AG04449 (cell line): ENCODE measurements at regions of chr14 and their contacts with region 1.

Region 1: DNA sequence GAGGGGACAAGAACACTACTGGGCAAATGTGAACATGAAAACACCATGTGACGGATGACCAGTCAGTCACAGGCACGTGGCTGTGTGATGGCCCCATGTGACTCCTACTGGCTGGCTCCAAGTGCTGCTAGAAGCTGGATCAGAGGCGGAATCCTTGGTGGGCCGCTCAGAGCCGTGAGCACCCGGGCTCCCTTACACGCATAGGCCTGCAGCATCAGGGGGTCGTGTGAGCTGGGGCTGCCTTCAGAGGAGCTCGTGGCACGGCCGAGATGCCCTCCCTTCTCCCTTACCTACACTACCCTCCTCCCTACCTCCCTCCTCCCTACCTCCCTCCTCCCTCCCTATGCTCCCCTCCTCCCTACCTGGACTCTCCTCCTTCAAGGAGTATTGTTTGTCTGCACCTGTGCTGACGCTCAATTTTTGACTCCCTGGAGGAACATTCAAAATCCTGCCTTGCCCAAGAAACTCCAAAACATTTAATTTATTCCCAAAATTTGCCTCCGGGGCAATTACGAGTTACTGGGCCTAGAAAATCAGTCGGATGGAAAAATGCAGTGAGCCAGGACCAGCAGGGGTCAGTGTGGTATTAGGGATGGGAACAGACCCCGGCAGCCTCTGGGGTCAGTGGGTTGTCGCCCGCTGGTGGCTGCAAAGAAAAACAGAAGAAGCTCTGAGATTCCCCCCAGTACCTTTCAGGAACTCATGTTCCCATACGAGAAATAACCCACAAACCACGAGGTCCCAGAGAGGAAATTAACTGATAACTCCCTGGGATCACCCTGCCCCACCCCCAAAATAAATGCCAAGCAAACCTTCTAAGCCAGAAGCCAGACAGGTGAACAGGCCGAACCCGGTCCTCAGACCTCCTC is 61.2 kb downstream of the C14orf132 start:
- DNase-seq: no peak
- H3K4me3 ChIP-seq: no peak overlapping the region
- CTCF ChIP-seq: peak; percentile 86

Region 2: DNA sequence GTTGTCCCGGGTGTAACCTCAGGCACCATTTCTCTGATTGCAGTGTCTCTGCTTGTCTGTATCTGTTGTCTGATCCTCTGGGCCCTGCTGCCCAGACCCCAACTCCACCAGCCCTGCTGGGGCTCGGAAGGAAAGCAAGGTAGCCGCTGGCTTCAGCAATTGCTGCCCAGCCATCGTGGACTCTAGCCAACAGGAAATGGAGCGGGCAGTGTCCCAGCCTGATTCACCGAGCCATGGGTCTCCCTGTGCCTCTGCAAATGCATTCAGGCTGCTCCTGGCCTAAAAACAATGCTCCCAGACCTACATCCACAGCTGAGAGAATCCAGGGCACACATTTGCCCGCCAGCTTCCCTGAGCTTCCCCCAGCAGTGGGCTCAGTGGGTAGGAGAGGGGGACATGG is 214.5 kb before region 1 on chr14:
- CTCF ChIA-PET with region 1: no interaction called
- POLR2A ChIA-PET with region 1: no interaction called
- DNase-seq: no peak
- H3K4me3 ChIP-seq: no peak overlapping the region
- CTCF ChIP-seq: no peak

Region 3: GRCh38 chr14:95964901-95965300 is 135.5 kb before region 1 on chr14:
- CTCF ChIA-PET with region 1: no interaction called
- POLR2A ChIA-PET with region 1: no interaction called
- DNase-seq: no peak
- H3K4me3 ChIP-seq: no peak overlapping the region
- CTCF ChIP-seq: no peak

Region 4: DNA sequence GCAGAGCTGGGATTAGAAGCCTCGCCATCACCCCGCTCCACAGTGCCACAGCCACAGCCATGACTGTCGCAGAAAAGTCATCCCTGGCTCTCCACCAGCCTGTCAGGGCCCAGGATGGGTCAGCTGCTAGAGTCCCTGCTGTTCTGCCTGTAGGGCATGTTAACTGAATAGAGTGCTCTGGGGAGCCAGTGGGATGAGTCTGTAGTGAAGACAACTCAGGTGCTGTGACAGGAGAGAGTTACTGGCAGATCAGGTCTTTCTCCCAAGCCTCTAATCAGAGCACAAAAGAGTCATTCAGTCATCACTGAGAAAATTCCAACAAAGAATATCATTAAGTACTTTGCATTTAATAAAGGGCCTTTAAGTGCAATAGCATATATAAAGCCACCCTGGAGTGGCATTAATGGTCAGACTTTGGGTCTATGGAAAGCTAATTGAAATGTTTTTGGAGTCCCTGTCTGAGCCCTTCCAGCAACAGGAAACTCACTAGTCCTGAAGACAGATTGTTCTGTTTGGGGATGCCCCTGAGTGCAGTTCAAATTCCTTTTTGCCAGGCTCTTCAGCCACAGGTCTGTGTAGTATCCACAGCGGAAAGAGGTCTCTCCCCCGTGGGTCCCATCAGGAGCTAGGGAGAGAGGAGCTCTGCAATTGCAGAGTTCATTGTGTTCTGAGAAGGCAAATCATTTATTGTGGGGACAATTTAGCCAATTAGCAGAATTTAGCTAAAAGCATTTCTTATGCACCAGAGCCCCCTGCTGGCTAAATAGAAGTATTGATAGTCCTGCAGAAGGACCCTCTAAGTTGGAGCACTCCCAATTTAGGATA is 106.4 kb before region 1 on chr14:
- CTCF ChIA-PET with region 1: interaction called, 708 read pairs
- POLR2A ChIA-PET with region 1: interaction called, 4 read pairs
- DNase-seq: no peak
- H3K4me3 ChIP-seq: no peak overlapping the region
- CTCF ChIP-seq: peak; percentile 56

Region 5: DNA sequence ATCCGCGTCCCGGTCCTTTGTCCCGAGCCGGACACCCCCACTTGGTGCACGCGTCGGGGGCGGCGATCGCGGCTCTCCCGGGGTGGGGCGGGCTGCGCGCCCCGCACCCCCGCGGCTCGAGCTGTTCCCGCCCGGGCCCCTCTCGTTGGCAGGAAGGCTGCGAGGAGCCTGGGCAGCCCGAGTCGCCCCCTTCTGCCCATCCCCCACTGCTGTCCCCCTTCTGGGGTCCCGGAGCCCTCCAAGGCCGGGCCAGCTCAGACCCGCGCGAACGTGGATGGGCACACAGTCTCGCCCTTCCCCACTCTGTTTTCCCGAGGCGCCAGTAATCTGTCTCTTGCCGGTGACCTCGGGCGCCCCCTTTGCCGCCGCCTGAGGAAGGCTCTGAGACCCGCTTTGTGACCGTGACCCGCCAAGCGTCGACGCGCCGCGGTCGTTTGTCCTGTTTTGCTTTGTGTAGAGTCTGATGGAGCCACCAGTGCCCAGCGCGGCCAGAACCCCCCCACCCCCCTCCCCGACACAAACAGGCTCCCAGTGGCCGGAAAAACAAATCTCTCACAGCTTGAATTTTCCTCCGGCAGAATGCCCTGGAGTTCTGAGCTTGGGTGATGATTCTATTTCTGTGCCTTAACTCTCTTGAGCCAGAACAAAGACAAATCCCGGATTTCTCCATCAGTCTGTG is 60.6 kb before region 1 on chr14:
- CTCF ChIA-PET with region 1: interaction called, 18 read pairs
- POLR2A ChIA-PET with region 1: no interaction called
- DNase-seq: no peak
- H3K4me3 ChIP-seq: peak overlapping the region; percentile 88
- CTCF ChIP-seq: peak; percentile 53

Region 6: GRCh38 chr14:96117100-96117897 is 16.9 kb after region 1 on chr14:
- CTCF ChIA-PET with region 1: interaction called, 55 read pairs
- POLR2A ChIA-PET with region 1: no interaction called
- DNase-seq: no peak
- H3K4me3 ChIP-seq: no peak overlapping the region
- CTCF ChIP-seq: peak; percentile 16

Region 7: DNA sequence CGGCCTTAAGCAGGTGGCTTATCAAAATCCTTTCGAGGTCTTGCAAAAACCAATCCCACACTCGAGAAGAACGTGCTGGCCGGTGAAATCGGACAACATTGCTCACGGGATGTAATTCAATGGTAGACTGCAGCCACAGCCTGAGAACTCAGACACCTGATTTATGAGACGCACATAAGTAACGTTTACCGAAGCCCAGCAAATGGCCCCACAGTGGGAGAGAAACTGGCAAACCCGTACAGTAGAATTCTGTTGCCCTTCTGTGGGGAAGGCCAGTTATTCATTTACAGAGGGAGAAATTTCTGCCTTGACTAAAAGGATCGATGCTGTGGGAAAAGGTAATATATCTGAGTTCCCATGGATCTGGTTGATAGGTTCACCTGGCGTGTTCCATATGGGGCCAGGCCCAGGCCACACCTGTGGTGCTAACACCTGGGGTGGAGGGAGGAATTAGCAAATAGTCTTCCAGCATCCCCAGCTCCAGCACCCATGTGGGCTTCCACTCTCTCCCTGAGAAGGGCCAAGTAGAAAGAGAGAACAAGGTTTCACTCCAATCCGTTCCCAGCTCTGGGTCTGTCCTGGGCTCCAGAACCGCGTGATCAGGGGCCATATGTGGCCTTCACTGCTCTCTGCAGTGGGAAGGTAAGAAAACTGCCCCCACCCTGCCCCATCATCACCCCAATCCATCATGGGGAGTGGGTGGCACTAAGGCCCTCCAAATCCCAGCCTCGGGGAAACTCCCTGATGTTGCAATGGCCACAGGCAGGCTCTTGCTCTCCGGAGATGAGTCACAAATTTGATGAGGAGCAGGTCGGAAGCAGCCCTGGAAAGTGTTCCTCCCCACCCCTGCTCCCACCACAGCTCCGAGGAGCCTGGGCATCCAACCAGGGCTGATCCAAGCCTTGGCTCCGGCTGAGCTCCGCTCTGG is 168.3 kb after region 1 on chr14:
- CTCF ChIA-PET with region 1: interaction called, 746 read pairs
- POLR2A ChIA-PET with region 1: no interaction called
- DNase-seq: peak; percentile 88
- H3K4me3 ChIP-seq: no peak overlapping the region
- CTCF ChIP-seq: no peak

Region 8: DNA sequence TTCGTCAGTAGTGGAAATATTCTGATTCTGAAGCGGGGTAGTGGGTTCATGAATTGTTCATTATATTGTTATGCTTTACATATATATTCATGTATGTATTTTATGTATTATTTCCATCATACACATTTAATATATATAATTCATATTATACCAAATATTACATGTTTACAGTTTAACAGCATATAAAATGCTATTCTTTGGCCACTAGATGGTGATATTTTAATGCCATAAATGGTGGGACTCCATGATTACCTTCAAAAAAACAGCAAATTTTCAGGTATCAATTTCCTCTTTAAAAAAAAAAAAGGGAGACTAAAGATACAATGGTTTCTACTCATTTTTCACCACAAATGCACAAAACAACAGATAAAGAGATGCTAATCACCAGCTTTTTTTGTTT is 196.6 kb after region 1 on chr14:
- CTCF ChIA-PET with region 1: interaction called, 36 read pairs
- POLR2A ChIA-PET with region 1: no interaction called
- DNase-seq: no peak
- H3K4me3 ChIP-seq: no peak overlapping the region
- CTCF ChIP-seq: peak; percentile 20

Region 9: GRCh38 chr14:96424109-96424989 is 324.0 kb after region 1 on chr14:
- CTCF ChIA-PET with region 1: interaction called, 38 read pairs
- POLR2A ChIA-PET with region 1: no interaction called
- DNase-seq: peak; percentile 16
- H3K4me3 ChIP-seq: peak overlapping the region; percentile 52
- CTCF ChIP-seq: peak; percentile 55